ENCODE measurements at regions of chr17 and their contacts with region 1.

Region 1: DNA sequence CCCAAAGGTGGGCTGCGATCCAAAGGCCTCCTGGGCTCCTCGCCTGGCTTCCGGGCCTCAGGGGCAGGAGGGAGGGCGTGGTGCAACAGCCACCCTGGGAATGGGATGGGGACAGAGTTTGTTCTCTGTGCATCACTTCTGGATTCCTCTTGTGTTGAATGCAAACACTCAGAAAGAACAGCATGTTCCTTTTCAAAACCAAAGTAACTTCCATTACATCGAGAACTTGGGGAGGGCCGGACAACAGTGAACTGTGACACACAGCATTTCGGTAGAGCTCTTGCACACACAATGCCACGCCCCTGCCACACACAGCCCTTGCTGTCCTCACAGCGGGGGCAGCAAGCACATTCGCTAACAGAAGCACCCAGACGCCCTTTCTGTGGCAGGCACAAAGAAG is 36.1 kb upstream of the FASN start:
- DNase-seq: peak; percentile 29
- H3K4me3 ChIP-seq: no peak overlapping the region
- H3K27ac ChIP-seq: peak overlapping the region; percentile 64
- H3K4me1 ChIP-seq: peaks cover 12% of the 10 kb centered on the region
- H3K27me3 ChIP-seq: no peaks in the 10 kb centered on the region
- CTCF ChIP-seq: no peak

Region 2: GRCh38 chr17:81911277-81911961 is 222.7 kb before region 1 on chr17 and contains the start of gene PCYT2:
- CTCF ChIA-PET with region 1: no interaction called
- dilution Hi-C with region 1: loop called (anchors 10 kb)
- in situ Hi-C with region 1: no loop called
- intact Hi-C with region 1: no loop called
- DNase-seq: peak; percentile 85
- H3K4me3 ChIP-seq: peak within 1 kb of the TSS; percentile 81 to 92 (median 83)
- H3K27ac ChIP-seq: peak within 1 kb of the TSS; percentile 19
- H3K4me1 ChIP-seq: peaks cover 12% of the 10 kb centered on the region
- H3K27me3 ChIP-seq: no peaks in the 10 kb centered on the region
- CTCF ChIP-seq: peak in 1 of 2 donors; percentile 2
- total RNA-seq, gene PCYT2: 23.5 to 48.7 TPM

Region 3: GRCh38 chr17:82051776-82052637 is 82.1 kb before region 1 on chr17 and contains the starts of genes GPS1 and RFNG:
- CTCF ChIA-PET with region 1: no interaction called
- dilution Hi-C with region 1: loop called (anchors 5 kb)
- in situ Hi-C with region 1: no loop called
- intact Hi-C with region 1: no loop called
- DNase-seq: peak; percentile 59
- H3K4me3 ChIP-seq: peak within 1 kb of the TSS; percentile 61 to 86 (median 65)
- H3K27ac ChIP-seq: peak within 1 kb of the TSS; percentile 30
- H3K4me1 ChIP-seq: peaks cover 23% of the 10 kb centered on the region
- H3K27me3 ChIP-seq: no peaks in the 10 kb centered on the region
- CTCF ChIP-seq: no peak
- total RNA-seq, gene GPS1: 84.2 to 98.2 TPM
- total RNA-seq, gene RFNG: 37.7 to 38.2 TPM

Region 4: GRCh38 chr17:82195675-82196672 is 61.9 kb after region 1 on chr17:
- CTCF ChIA-PET with region 1: no interaction called
- dilution Hi-C with region 1: no loop called
- in situ Hi-C with region 1: no loop called
- intact Hi-C with region 1: no loop called
- DNase-seq: no peak
- H3K4me3 ChIP-seq: no peak overlapping the region
- H3K27ac ChIP-seq: no peak overlapping the region
- H3K4me1 ChIP-seq: no peaks in the 10 kb centered on the region
- H3K27me3 ChIP-seq: no peaks in the 10 kb centered on the region
- CTCF ChIP-seq: no peak

Region 5: GRCh38 chr17:82267575-82268379 is 133.7 kb after region 1 on chr17:
- CTCF ChIA-PET with region 1: no interaction called
- dilution Hi-C with region 1: loop called (anchors 10 kb)
- in situ Hi-C with region 1: no loop called
- intact Hi-C with region 1: no loop called
- DNase-seq: peak; percentile 86
- H3K4me3 ChIP-seq: peak overlapping the region in 1 of 3 experiments; percentile 19
- H3K27ac ChIP-seq: peak overlapping the region; percentile 26
- H3K4me1 ChIP-seq: peaks cover 48% of the 10 kb centered on the region
- H3K27me3 ChIP-seq: no peaks in the 10 kb centered on the region
- CTCF ChIP-seq: no peak